CD8-positive, alpha-beta T cell (primary cell): ENCODE measurements at regions of chr2 and their contacts with region 1.

Region 1: GRCh38 chr2:144522897-144523595 is 3.1 kb upstream of the ZEB2 start:
- DNase-seq: peak in 2 of 9 experiments; percentile 30 to 46
- ATAC-seq: no peak
- H3K4me3 ChIP-seq: peak overlapping the region; percentile 15 to 61
- H3K4me3 Mint-ChIP-seq: peak overlapping the region; percentile 85
- H3K27ac ChIP-seq: peak overlapping the region in 1 of 2 experiments; percentile 34
- H3K27ac Mint-ChIP-seq: no peak overlapping the region
- H3K4me1 ChIP-seq: peaks cover 19% of the 10 kb centered on the region
- H3K4me1 Mint-ChIP-seq: peaks cover 22% of the 10 kb centered on the region
- H3K27me3 ChIP-seq: peaks cover 4 to 47% of the 10 kb centered on the region in 2 experiments
- H3K27me3 Mint-ChIP-seq: peaks cover 40% of the 10 kb centered on the region
- CTCF ChIP-seq: no peak

Region 2: DNA sequence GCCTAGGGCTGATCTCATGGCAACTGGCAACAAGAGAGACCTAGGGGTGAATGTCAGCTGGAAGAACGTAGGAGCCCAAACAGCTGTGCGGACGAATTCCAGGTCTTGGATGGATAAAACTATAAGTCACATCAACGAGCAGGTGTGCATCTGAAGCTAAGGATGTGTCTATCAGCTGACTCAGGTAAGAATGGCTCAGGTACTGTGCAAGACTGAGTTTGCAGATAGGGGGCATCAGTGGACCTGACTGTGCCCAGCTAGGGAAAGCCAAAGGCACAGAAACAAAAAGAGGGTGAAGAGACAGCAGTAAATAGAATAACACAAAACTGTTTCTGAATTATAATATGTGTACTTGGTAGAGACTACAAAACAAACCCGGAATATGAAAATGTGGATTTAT is 360.4 kb before region 1 on chr2:
- CTCF ChIA-PET with region 1: no interaction called
- POLR2A ChIA-PET with region 1: no interaction called
- intact Hi-C with region 1: loop called in 1 of 2 experiments (anchors 2 kb)
- DNase-seq: peak; percentile 19 to 76 (median 52)
- ATAC-seq: peak; percentile 87
- H3K4me3 ChIP-seq: no peak overlapping the region
- H3K4me3 Mint-ChIP-seq: no peak overlapping the region
- H3K27ac ChIP-seq: no peak overlapping the region
- H3K27ac Mint-ChIP-seq: no peak overlapping the region
- H3K4me1 ChIP-seq: no peaks in the 10 kb centered on the region
- H3K4me1 Mint-ChIP-seq: no peaks in the 10 kb centered on the region
- H3K27me3 ChIP-seq: no peaks in the 10 kb centered on the region
- H3K27me3 Mint-ChIP-seq: no peaks in the 10 kb centered on the region
- CTCF ChIP-seq: peak; percentile 70

Region 3: DNA sequence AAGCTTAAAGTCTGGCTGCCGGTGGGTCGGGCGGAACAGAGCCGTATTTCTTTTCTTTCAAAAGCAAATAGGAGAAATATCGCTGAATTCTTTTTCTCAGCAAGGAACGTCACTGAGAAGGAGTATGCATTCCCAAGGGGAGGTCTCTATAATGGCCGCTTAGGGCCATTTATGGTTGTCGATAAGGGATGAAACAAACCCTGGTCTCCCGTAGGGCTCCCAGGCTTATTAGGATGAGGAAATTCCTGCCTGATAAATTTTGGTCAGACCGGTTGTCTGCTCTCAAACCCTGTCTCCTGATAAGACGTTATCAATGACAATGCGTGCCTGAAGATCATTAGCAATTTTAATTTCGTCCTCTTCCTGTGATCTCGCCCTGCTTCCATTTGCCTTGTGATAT is 224.5 kb after region 1 on chr2:
- CTCF ChIA-PET with region 1: no interaction called
- POLR2A ChIA-PET with region 1: no interaction called
- intact Hi-C with region 1: no loop called
- DNase-seq: no peak
- ATAC-seq: no peak
- H3K4me3 ChIP-seq: no peak overlapping the region
- H3K4me3 Mint-ChIP-seq: no peak overlapping the region
- H3K27ac ChIP-seq: no peak overlapping the region
- H3K27ac Mint-ChIP-seq: no peak overlapping the region
- H3K4me1 ChIP-seq: no peaks in the 10 kb centered on the region
- H3K4me1 Mint-ChIP-seq: no peaks in the 10 kb centered on the region
- H3K27me3 ChIP-seq: no peaks in the 10 kb centered on the region
- H3K27me3 Mint-ChIP-seq: peaks cover 4% of the 10 kb centered on the region
- CTCF ChIP-seq: no peak